Activated T-helper 1 cell treated with anti-CD3 and anti-CD28 coated beads, Interleukin-12 subunit alpha, Interleukin-12 subunit beta, Interleukin-2, Interleukin-4 antibody, amounts not matched to agents 30 ng/mL and 10 ng/mL and 1 ng/mL, durations not matched to agents 14 hours and 24 hours and 36 hours (primary cell): ENCODE measurements at regions of chr16 and their contacts with region 1.

Region 1: GRCh38 chr16:30698139-30698815 is 694 bp upstream of the SRCAP start:
- DNase-seq: peak; percentile 99
- H3K4me3 Mint-ChIP-seq: peak overlapping the region; percentile 99
- H3K27ac Mint-ChIP-seq: peak overlapping the region; percentile 99
- H3K4me1 Mint-ChIP-seq: peaks cover 42% of the 10 kb centered on the region
- H3K27me3 Mint-ChIP-seq: peaks cover 2% of the 10 kb centered on the region

Region 2: GRCh38 chr16:30370444-30371247 is 327.6 kb before region 1 on chr16 and contains the start of gene TBC1D10B:
- intact Hi-C with region 1: loop called (anchors 1 kb)
- DNase-seq: peak; percentile 99
- H3K4me3 Mint-ChIP-seq: peak within 1 kb of the TSS; percentile 94
- H3K27ac Mint-ChIP-seq: peak within 1 kb of the TSS; percentile 89
- H3K4me1 Mint-ChIP-seq: peaks cover 41% of the 10 kb centered on the region
- H3K27me3 Mint-ChIP-seq: no peaks in the 10 kb centered on the region
- total RNA-seq, gene TBC1D10B: 68.9 and 73.6 TPM in 2 replicates

Region 3: GRCh38 chr16:30557957-30558788 is 140.1 kb before region 1 on chr16 and contains the start of gene ZNF764:
- intact Hi-C with region 1: loop called (anchors 2 kb)
- DNase-seq: peak; percentile 97
- H3K4me3 Mint-ChIP-seq: peak within 1 kb of the TSS; percentile 90
- H3K27ac Mint-ChIP-seq: peak within 1 kb of the TSS; percentile 92
- H3K4me1 Mint-ChIP-seq: peaks cover 42% of the 10 kb centered on the region
- H3K27me3 Mint-ChIP-seq: no peaks in the 10 kb centered on the region
- total RNA-seq, gene ZNF764: 17.9 and 21.2 TPM in 2 replicates

Region 4: GRCh38 chr16:30650369-30651123 is 47.7 kb before region 1 on chr16 and contains the start of gene PRR14:
- intact Hi-C with region 1: loop called (anchors 1 kb)
- DNase-seq: peak; percentile 98
- H3K4me3 Mint-ChIP-seq: peak within 1 kb of the TSS; percentile 97
- H3K27ac Mint-ChIP-seq: peak within 1 kb of the TSS; percentile 98
- H3K4me1 Mint-ChIP-seq: peaks cover 25% of the 10 kb centered on the region
- H3K27me3 Mint-ChIP-seq: peaks cover 2% of the 10 kb centered on the region
- total RNA-seq, gene PRR14: 91.9 and 97.4 TPM in 2 replicates

Region 5: GRCh38 chr16:30813821-30814189 is 115.5 kb after region 1 on chr16:
- intact Hi-C with region 1: loop called (anchors 1 kb)
- DNase-seq: no peak
- H3K4me3 Mint-ChIP-seq: peak overlapping the region; percentile 92
- H3K27ac Mint-ChIP-seq: peak overlapping the region; percentile 78
- H3K4me1 Mint-ChIP-seq: peaks cover 15% of the 10 kb centered on the region
- H3K27me3 Mint-ChIP-seq: peaks cover 4% of the 10 kb centered on the region

Region 6: GRCh38 chr16:31032736-31033708 is 334.7 kb after region 1 on chr16 and contains the start of gene STX4:
- intact Hi-C with region 1: loop called (anchors 1 kb)
- DNase-seq: peak; percentile 97
- H3K4me3 Mint-ChIP-seq: peak within 1 kb of the TSS; percentile 95
- H3K27ac Mint-ChIP-seq: peak within 1 kb of the TSS; percentile 92
- H3K4me1 Mint-ChIP-seq: peaks cover 24% of the 10 kb centered on the region
- H3K27me3 Mint-ChIP-seq: no peaks in the 10 kb centered on the region
- total RNA-seq, gene STX4: 56.4 and 58.7 TPM in 2 replicates